Psoas muscle (tissue), 8 donors: ENCODE measurements at regions of chr4 and their contacts with region 1.

Region 1: DNA sequence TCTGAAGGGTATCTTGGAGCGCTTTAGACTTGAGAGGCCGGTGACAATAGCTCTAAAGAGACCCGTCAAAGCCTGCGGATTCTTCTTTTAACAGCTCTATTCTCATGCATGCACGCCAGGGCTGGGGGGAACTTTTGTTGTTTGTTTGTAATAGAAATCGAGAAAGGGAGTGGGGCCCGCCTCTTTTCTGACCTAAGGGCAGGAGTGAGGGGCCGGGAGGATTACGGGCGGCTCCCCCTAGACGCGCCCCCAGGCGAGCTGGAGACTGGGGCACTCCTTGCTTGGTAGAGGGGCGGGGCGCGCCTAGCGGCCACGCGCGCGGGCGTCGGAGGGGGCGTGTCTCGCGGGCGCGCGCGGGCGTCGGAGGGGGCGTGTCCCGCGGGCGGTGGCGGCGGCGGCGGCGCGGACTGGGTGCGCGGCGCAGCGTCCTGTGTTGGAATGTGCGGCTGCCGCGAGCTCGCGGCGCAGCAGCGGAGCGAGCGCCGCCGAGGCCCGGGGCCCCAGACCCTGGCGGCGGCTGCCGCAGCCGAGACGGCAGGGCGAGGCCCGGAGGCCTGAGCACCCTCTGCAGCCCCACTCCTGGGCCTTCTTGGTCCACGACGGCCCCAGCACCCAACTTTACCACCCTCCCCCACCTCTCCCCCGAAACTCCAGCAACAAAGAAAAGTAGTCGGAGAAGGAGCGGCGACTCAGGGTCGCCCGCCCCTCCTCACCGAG is at the start of gene REST:
- DNase-seq: peak; percentile 81 to 85
- ATAC-seq: peak; percentile 82 to 84 (median 82)
- H3K4me3 ChIP-seq: peak within 1 kb of the TSS; percentile 96
- H3K27ac ChIP-seq: peak within 1 kb of the TSS; percentile 91
- H3K4me1 ChIP-seq: peaks cover 26% of the 10 kb centered on the region
- H3K27me3 ChIP-seq: no peaks in the 10 kb centered on the region
- CTCF ChIP-seq: no peak
- total RNA-seq, gene REST: 13.5 to 21.4 (median 20.0) TPM

Region 2: DNA sequence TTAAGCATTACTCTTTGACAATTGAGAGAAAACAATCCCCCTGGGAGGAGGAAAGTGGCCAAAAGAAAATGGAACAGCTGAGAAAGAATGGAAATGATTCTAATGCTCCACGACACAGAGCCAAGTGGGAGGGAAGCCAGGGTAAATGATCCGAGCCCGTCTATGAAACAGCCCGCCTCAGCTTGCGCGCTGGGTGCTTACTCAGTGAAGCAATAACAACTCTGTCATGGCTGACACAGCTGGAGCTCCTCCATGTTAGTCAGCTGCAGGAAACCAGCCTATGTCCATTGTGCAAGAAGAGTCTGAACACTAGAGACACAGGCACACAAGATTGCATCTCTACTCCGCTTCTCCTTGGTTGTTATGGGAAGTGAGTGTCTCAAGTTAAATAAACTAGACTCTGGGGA is 50.5 kb after region 1 on chr4:
- intact Hi-C with region 1: loop called in 1 of 2 experiments (anchors 5 kb)
- DNase-seq: peak; percentile 91 to 92
- ATAC-seq: peak; percentile 98 to 99 (median 98)
- H3K4me3 ChIP-seq: peak overlapping the region; percentile 45
- H3K27ac ChIP-seq: peak overlapping the region; percentile 63
- H3K4me1 ChIP-seq: peaks cover 9% of the 10 kb centered on the region
- H3K27me3 ChIP-seq: no peaks in the 10 kb centered on the region
- CTCF ChIP-seq: no peak

Region 3: DNA sequence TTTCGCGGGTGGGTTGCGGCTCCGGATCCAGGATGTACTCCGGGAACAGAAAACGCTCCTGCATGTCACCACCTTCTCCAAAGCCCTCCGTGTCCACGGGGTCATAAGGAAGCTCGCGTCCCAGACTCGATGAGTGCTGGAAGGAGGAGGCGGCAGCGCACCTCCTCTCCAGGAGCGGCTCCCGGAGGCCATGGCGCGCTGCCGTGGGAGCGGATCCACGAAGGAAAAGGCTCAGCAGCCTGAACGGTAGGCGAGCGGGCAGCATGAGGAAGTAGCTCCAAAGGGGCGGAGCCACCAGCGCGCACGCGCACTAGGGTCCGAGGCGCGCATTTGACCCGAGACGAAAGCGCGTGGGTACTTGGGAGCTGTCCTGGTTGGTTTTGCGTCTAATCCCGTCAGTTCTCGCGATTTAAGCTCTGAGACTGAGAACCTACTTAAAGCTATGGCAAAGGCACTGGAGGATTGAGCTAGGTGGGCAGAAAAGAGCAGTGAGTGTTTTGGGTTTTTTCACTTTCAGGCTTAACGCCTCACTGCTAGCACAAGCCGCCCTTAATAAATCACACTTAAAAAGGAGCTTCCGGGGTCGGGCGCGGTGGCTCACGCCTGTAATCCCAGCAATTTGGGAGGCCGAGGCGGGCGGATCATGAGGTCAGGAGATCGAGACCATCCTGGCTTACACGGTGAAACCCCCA is 69.8 kb after region 1 on chr4 and contains the start of gene NOA1:
- intact Hi-C with region 1: loop called (anchors 5 to 10 kb)
- DNase-seq: peak; percentile 98
- ATAC-seq: peak; percentile 90 to 92 (median 91)
- H3K4me3 ChIP-seq: peak within 1 kb of the TSS; percentile 86
- H3K27ac ChIP-seq: peak within 1 kb of the TSS; percentile 88
- H3K4me1 ChIP-seq: peaks cover 32% of the 10 kb centered on the region
- H3K27me3 ChIP-seq: no peaks in the 10 kb centered on the region
- CTCF ChIP-seq: no peak
- total RNA-seq, gene NOA1: 11.3 to 19.9 (median 15.3) TPM